ENCODE measurements at regions of chr1 and their contacts with region 1.

Region 1: GRCh38 chr1:46991083-46991923 is 32.2 kb upstream of the CYP4X1 start:
- DNase-seq: no peak
- ATAC-seq: no peak
- H3K4me3 ChIP-seq: no peak overlapping the region
- H3K27ac ChIP-seq: no peak overlapping the region
- H3K4me1 ChIP-seq: no peaks in the 10 kb centered on the region
- H3K27me3 ChIP-seq: no peaks in the 10 kb centered on the region

Region 2: GRCh38 chr1:46747683-46748288 is 243.5 kb before region 1 on chr1:
- intact Hi-C with region 1: loop called in 2 of 4 experiments (anchors 10 kb)
- DNase-seq: no peak
- ATAC-seq: peak; percentile 71 to 80
- H3K4me3 ChIP-seq: no peak overlapping the region
- H3K27ac ChIP-seq: no peak overlapping the region
- H3K4me1 ChIP-seq: peaks cover 5% of the 10 kb centered on the region
- H3K27me3 ChIP-seq: no peaks in the 10 kb centered on the region

Region 3: GRCh38 chr1:47137925-47138615 is 146.8 kb after region 1 on chr1:
- intact Hi-C with region 1: no loop called
- DNase-seq: no peak
- ATAC-seq: no peak
- H3K4me3 ChIP-seq: no peak overlapping the region
- H3K27ac ChIP-seq: no peak overlapping the region
- H3K4me1 ChIP-seq: no peaks in the 10 kb centered on the region
- H3K27me3 ChIP-seq: no peaks in the 10 kb centered on the region

Measured in right cardiac atrium (tissue), 5 donors.